Right cardiac atrium (tissue), 5 donors: ENCODE measurements at regions of chr20 and their contacts with region 1.

Region 1: DNA sequence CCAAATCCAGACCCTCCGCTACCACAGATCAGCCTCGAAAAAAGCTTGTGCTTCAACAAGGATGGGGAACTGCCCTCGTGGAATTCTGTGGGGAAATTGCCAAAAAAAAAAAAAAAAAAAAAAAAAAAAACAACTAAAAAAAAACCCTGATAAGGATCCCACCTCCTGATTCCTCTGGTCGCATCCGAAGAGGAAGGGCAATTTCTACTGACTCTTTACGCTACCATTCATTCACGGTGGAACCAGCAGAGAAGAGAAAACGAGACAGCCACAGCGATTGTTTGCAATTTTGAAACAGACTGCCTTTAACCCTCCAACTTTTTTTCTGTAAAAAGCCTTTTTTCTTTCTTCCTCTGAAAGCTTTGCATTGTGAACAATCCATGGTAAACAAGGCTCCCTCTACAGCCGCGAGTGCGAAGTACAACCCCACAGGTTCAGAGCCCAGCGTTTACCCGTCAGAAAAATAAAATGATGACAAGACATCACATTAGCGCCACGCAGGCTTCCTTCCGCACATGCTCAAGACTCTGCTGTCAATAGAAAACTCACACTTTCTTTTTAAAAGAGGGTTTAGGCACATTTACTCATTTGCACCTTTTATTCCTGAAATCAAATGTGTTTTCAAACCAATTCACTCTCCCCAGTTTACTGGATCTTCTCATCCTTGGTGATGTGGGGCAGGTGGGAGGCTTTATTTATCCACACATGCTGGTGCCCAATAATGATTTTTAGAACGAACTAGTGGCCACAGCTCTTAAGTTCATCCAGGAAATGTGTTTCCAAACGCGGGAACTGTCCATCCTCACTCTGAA is 100.0 kb downstream of the NOL4L start:
- DNase-seq: peak; percentile 78 to 93 (median 82)
- ATAC-seq: peak; percentile 56 to 64
- H3K4me3 ChIP-seq: peak overlapping the region; percentile 99
- H3K27ac ChIP-seq: no peak overlapping the region
- H3K4me1 ChIP-seq: peaks cover 8% of the 10 kb centered on the region
- H3K27me3 ChIP-seq: no peaks in the 10 kb centered on the region

Region 2: GRCh38 chr20:31869942-31870725 is 615.0 kb before region 1 on chr20 and contains the starts of genes DUSP15 and TTLL9:
- intact Hi-C with region 1: no loop called
- DNase-seq: peak; percentile 47 to 84 (median 82)
- ATAC-seq: peak; percentile 88 to 89
- H3K4me3 ChIP-seq: peak within 1 kb of the TSS; percentile 60
- H3K27ac ChIP-seq: peak within 1 kb of the TSS; percentile 25
- H3K4me1 ChIP-seq: peaks cover 2% of the 10 kb centered on the region
- H3K27me3 ChIP-seq: no peaks in the 10 kb centered on the region
- total RNA-seq, gene DUSP15: 6.6 to 8.3 (median 7.1) TPM
- total RNA-seq, gene TTLL9: 0.15 to 0.19 TPM in 2 of 4 donors, not detected in the others

Region 3: GRCh38 chr20:32359633-32360332 is 125.4 kb before region 1 on chr20:
- intact Hi-C with region 1: loop called in 1 of 4 experiments (anchors 10 kb)
- DNase-seq: no peak
- ATAC-seq: no peak
- H3K4me3 ChIP-seq: peak overlapping the region; percentile 97
- H3K27ac ChIP-seq: peak overlapping the region; percentile 94
- H3K4me1 ChIP-seq: peaks cover 4% of the 10 kb centered on the region
- H3K27me3 ChIP-seq: no peaks in the 10 kb centered on the region

Region 4: DNA sequence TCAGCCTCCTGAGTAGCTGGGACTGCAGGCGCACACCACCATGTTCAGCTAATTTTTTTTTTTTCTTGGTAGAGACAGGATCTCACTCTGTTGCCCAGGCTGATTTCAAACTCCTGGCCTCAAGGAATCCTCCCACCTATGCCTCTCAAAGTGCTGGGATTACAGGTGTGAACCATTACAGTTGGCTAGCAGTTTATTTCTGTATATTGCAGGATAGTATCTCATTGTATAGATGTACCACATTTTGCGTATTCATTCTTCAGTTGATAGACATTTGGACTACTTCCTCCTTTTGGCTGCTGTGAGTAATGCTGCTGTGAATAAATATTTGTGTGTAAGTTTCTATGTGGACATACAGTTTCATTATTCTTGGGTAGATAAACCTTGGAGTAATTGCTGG is 94.2 kb before region 1 on chr20:
- intact Hi-C with region 1: no loop called
- DNase-seq: no peak
- ATAC-seq: no peak
- H3K4me3 ChIP-seq: no peak overlapping the region
- H3K27ac ChIP-seq: no peak overlapping the region
- H3K4me1 ChIP-seq: peaks cover 3% of the 10 kb centered on the region
- H3K27me3 ChIP-seq: no peaks in the 10 kb centered on the region